ENCODE measurements at regions of chr17 and their contacts with region 1.

Region 1: GRCh38 chr17:39730095-39730921 is at the start of gene MIEN1:
- DNase-seq: peak; percentile 74 to 100
- H3K4me3 ChIP-seq: peak within 1 kb of the TSS; percentile 55 to 72 (median 61)
- H3K27ac ChIP-seq: peak within 1 kb of the TSS; percentile 1; the same call in 1 of the 2 replicates
- H3K4me1 ChIP-seq: peaks cover 0 to 4% (median 0%) of the 10 kb centered on the region in 4 experiments; a peak in 2 of 7 replicates
- H3K27me3 ChIP-seq: no peaks in the 10 kb centered on the region
- CTCF ChIP-seq: peak; percentile 42 to 76 (median 73)
- EP300 ChIP-seq: no peak; a peak in 1 of 3 replicates
- POLR2A ChIP-seq: peak in 1 of 2 experiments; percentile 70; a peak in 2 of 3 replicates
- RAD21 ChIP-seq: peak; percentile 47 to 56
- total RNA-seq, gene MIEN1: 29.6 and 30.0 TPM in 2 replicates

Region 2: DNA sequence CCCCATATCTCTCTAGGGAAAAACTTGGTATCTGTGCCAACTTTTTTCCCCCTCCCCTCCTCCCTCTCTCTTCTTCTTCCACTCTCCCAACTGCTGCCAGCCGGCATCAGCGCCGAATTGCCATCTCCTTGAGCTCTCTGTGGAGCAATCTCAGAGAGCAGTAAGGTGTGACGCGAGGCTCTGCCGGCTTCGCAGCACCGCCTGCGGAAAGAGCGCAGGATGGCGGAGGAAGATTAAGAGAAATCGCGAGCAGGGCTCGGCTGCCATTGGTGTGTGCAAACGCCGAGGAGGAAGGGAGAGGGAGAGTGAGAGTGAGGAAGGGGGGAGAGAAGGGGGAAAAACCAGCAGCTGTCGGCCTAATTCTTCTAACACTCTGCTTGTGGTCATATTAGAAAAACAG is 166.8 kb before region 1 on chr17:
- CTCF ChIA-PET with region 1: no interaction called
- POLR2A ChIA-PET with region 1: no interaction called
- DNase-seq: peak in 1 of 2 experiments; percentile 62
- H3K4me3 ChIP-seq: peak overlapping the region in 1 of 4 experiments; percentile 26; a peak in 3 of 8 replicates
- H3K27ac ChIP-seq: peak overlapping the region; percentile 29
- H3K4me1 ChIP-seq: peaks cover 4 to 7% (median 6%) of the 10 kb centered on the region in 4 experiments; a peak in 5 of 7 replicates
- H3K27me3 ChIP-seq: no peaks in the 10 kb centered on the region
- CTCF ChIP-seq: no peak
- EP300 ChIP-seq: no peak
- POLR2A ChIP-seq: no peak; a peak in 1 of 3 replicates
- RAD21 ChIP-seq: no peak

Region 3: GRCh38 chr17:39621523-39622379 is 108.6 kb before region 1 on chr17:
- CTCF ChIA-PET with region 1: interaction called, 19 read pairs
- POLR2A ChIA-PET with region 1: interaction called, 3 read pairs
- DNase-seq: peak in 1 of 2 experiments; percentile 100
- H3K4me3 ChIP-seq: no peak overlapping the region
- H3K27ac ChIP-seq: no peak overlapping the region
- H3K4me1 ChIP-seq: peaks cover 0 to 20% (median 14%) of the 10 kb centered on the region in 4 experiments; a peak in 6 of 7 replicates
- H3K27me3 ChIP-seq: peaks cover 18 to 53% (median 50%) of the 10 kb centered on the region in 4 experiments
- CTCF ChIP-seq: peak; percentile 100
- EP300 ChIP-seq: peak in 1 of 2 experiments; percentile 49; a peak in 1 of 3 replicates
- POLR2A ChIP-seq: no peak
- RAD21 ChIP-seq: peak; percentile 96 to 97

Region 4: GRCh38 chr17:39636927-39637736 is 93.2 kb before region 1 on chr17 and contains the start of gene STARD3:
- CTCF ChIA-PET with region 1: interaction called, 13 read pairs
- POLR2A ChIA-PET with region 1: no interaction called
- DNase-seq: peak in 1 of 2 experiments; percentile 92
- H3K4me3 ChIP-seq: peak within 1 kb of the TSS; percentile 79 to 91 (median 85)
- H3K27ac ChIP-seq: peak within 1 kb of the TSS; percentile 64; the same call in 1 of the 2 replicates
- H3K4me1 ChIP-seq: peaks cover 13 to 40% (median 26%) of the 10 kb centered on the region in 4 experiments
- H3K27me3 ChIP-seq: 0 out of 7 replicates have a peak, but pooled peaks cover 0 to 3% (median 0%) of the 10 kb centered on the region in 4 experiments
- CTCF ChIP-seq: peak in 2 of 3 experiments; percentile 18 to 32; a peak in 3 of 4 replicates
- EP300 ChIP-seq: 0 out of 3 replicates have a peak, but pooled peaks of 1 of the 2 experiments have one; percentile 22
- POLR2A ChIP-seq: peak in 1 of 2 experiments; percentile 61; a peak in 2 of 3 replicates
- RAD21 ChIP-seq: 0 out of 4 replicates have a peak, but pooled peaks of 1 of the 2 experiments have one; percentile 6
- total RNA-seq, gene STARD3: 47.6 and 56.7 TPM in 2 replicates

Region 5: DNA sequence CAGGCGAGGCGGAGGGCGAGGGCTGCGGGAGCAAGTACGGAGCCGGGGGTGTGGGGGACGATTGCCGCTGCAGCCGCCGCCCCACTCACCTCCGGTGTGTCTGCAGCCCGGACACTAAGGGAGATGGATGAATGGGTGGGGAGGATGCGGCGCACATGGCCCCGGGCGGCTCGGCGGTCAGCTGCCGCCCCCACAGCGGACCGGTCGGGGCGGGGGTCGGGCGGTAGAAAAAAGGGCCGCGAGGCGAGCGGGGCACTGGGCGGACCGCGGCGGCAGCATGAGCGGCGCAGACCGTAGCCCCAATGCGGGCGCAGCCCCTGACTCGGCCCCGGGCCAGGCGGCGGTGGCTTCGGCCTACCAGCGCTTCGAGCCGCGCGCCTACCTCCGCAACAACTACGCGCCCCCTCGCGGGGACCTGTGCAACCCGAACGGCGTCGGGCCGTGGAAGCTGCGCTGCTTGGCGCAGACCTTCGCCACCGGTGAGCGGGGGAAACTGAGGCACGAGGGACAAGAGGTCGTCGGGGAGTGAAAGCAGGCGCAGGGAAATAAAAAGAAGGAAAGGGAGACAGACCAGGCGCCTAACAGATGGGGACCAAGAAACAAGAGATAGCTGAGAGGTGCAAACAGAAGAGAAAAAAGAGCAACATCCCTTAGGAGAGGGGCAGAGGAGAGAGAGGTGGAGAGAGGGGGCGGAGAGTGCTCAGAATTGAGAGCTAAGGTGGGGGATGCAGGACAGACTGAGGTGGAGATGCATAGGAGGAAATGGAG is 61.9 kb before region 1 on chr17 and contains the start of gene PNMT:
- CTCF ChIA-PET with region 1: interaction called, 46 read pairs
- POLR2A ChIA-PET with region 1: interaction called, 8 read pairs
- DNase-seq: peak in 1 of 2 experiments; percentile 87
- H3K4me3 ChIP-seq: peak within 1 kb of the TSS; percentile 29 to 67 (median 32)
- H3K27ac ChIP-seq: no peak within 1 kb of the TSS
- H3K4me1 ChIP-seq: peaks cover 0 to 43% (median 36%) of the 10 kb centered on the region in 4 experiments; a peak in 6 of 7 replicates
- H3K27me3 ChIP-seq: peaks cover 0 to 25% (median 6%) of the 10 kb centered on the region in 4 experiments; a peak in 4 of 7 replicates
- CTCF ChIP-seq: peak; percentile 63 to 72 (median 67)
- EP300 ChIP-seq: no peak
- POLR2A ChIP-seq: no peak
- RAD21 ChIP-seq: peak; percentile 19 to 61; a peak in 3 of 4 replicates
- total RNA-seq, gene PNMT: 4.4 and 5.6 TPM in 2 replicates

Region 6: GRCh38 chr17:39699818-39700147 is 30.5 kb before region 1 on chr17 and contains the start of gene ERBB2:
- CTCF ChIA-PET with region 1: interaction called, 35 read pairs
- POLR2A ChIA-PET with region 1: interaction called, 20 read pairs
- DNase-seq: peak in 1 of 2 experiments; percentile 67
- H3K4me3 ChIP-seq: peak within 1 kb of the TSS; percentile 78 to 98 (median 89)
- H3K27ac ChIP-seq: peak within 1 kb of the TSS; percentile 68; the same call in 1 of the 2 replicates
- H3K4me1 ChIP-seq: peaks cover 26 to 48% (median 33%) of the 10 kb centered on the region in 4 experiments
- H3K27me3 ChIP-seq: no peaks in the 10 kb centered on the region
- CTCF ChIP-seq: no peak
- EP300 ChIP-seq: no peak
- POLR2A ChIP-seq: peak in 1 of 2 experiments; percentile 59; a peak in 1 of 3 replicates
- RAD21 ChIP-seq: no peak
- total RNA-seq, gene ERBB2: 394 and 403 TPM in 2 replicates

Region 7: DNA sequence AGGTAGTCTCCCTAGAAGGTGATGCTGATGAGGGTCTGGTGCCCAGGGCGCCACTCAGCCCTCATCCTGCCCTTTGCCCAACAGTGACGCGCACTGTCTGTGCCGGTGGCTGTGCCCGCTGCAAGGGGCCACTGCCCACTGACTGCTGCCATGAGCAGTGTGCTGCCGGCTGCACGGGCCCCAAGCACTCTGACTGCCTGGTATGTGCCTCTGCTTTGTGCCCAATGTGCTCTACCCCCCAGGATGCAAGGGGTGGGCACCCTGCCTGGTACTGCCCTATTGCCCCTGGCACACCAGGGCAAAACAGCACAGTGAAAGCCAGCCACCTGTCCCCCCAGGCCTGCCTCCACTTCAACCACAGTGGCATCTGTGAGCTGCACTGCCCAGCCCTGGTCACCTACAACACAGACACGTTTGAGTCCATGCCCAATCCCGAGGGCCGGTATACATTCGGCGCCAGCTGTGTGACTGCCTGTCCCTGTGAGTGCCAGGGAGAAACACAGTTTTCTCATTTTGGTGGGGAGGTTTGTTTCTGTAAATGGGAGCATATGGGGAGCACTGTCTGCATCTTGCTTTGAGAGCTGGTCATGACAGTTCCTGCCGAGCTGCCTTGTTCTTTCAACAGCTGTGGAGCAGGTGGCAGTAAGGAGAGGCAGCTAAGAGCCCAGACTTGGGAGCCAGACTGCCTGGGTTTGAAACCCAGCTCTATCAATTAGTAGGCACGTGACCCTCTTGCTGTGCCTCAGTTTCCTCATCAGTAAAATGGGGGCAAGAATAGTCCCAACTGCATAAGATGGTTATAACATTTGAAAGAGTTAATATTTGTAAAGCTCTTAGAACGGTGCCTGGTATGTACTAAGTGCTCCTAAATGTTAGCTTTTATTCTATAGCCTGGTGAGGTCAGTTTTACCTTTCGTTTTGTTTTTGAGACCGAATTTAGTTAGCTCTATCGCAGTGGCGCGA is 20.0 kb before region 1 on chr17:
- CTCF ChIA-PET with region 1: interaction called, 13 read pairs
- POLR2A ChIA-PET with region 1: interaction called, 19 read pairs
- DNase-seq: no peak
- H3K4me3 ChIP-seq: no peak overlapping the region
- H3K27ac ChIP-seq: no peak overlapping the region
- H3K4me1 ChIP-seq: peaks cover 0 to 11% (median 6%) of the 10 kb centered on the region in 4 experiments; a peak in 6 of 7 replicates
- H3K27me3 ChIP-seq: no peaks in the 10 kb centered on the region
- CTCF ChIP-seq: no peak
- EP300 ChIP-seq: no peak
- POLR2A ChIP-seq: no peak
- RAD21 ChIP-seq: no peak

Region 8: GRCh38 chr17:39754161-39754951 is 24.0 kb after region 1 on chr17:
- CTCF ChIA-PET with region 1: interaction called, 50 read pairs
- POLR2A ChIA-PET with region 1: interaction called, 54 read pairs
- DNase-seq: peak in 1 of 2 experiments; percentile 96
- H3K4me3 ChIP-seq: peak overlapping the region; percentile 30 to 82 (median 74)
- H3K27ac ChIP-seq: no peak overlapping the region
- H3K4me1 ChIP-seq: peaks cover 9 to 29% (median 21%) of the 10 kb centered on the region in 4 experiments
- H3K27me3 ChIP-seq: peaks cover 0 to 3% (median 2%) of the 10 kb centered on the region in 4 experiments; a peak in 2 of 7 replicates
- CTCF ChIP-seq: peak; percentile 81 to 89 (median 89)
- EP300 ChIP-seq: no peak
- POLR2A ChIP-seq: 0 out of 3 replicates have a peak, but pooled peaks of 1 of the 2 experiments have one; percentile 32
- RAD21 ChIP-seq: peak; percentile 89 to 92

Region 9: DNA sequence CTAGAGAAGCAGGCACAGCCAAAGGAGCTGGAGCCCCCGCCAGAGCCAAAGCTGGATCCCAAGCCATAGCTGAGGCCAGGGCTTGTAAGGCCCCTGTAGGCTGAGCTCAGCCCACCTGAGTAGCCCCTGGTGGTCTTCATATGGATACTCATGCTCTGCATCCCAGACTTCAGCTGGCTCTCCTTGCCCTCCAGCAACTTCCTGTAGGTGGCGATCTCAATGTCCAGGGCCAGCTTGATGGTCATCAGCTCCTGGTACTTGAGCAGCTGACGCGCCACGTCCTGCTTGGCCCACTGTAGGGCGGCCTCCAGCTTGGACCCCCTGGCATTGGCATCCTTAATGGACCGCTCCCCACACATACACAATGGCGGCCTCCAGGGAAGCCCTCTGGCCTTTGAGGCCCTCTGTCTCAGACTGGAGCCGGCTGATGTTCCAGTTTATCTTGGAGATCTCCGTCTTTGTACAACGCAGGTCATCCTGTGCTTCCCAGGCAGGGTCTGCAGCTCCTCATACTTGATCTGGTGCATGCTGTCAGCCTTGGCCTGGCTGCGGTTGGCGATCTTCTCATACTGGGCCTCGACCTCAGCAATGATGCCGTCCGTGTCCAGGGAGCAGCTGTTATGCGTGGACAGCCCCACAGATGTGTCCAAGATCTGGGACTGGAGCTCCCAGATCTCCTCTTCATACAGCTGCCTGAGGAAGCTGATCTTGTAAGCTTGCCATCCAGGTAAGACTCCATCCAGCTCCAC is 104.9 kb after region 1 on chr17:
- CTCF ChIA-PET with region 1: no interaction called
- POLR2A ChIA-PET with region 1: no interaction called
- DNase-seq: no peak
- H3K4me3 ChIP-seq: no peak overlapping the region
- H3K27ac ChIP-seq: no peak overlapping the region
- H3K4me1 ChIP-seq: no peaks in the 10 kb centered on the region
- H3K27me3 ChIP-seq: no peaks in the 10 kb centered on the region
- CTCF ChIP-seq: peak; percentile 63 to 75 (median 71)
- EP300 ChIP-seq: no peak
- POLR2A ChIP-seq: no peak
- RAD21 ChIP-seq: peak in 1 of 2 experiments; percentile 40; a peak in 1 of 4 replicates